Uterus (tissue), 4 donors: ENCODE measurements at regions of chr19 and their contacts with region 1.

Region 1: DNA sequence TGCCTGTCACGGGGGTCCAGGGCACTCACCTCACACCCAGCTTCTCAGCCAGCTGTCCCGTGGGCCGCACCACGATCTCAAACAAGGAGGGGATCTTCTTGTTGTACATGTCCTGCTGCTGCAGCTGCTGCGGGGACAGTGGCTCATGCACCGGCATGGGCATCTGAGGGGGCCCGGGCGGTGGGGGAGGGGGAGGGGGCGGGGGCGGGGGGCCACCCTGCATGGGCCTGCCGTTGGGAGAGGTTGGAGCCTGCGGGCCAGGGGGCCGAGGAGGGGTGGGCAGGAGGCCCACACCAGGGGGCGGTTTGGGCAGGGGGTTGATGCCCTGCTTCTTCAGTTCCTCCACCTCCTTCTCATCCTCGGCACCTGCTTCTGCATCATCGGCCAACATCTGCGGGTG is 23.9 kb upstream of the TMEM160 start:
- DNase-seq: no peak
- H3K4me3 ChIP-seq: no peak overlapping the region
- H3K27ac ChIP-seq: no peak overlapping the region
- H3K4me1 ChIP-seq: no peaks in the 10 kb centered on the region
- H3K27me3 ChIP-seq: no peaks in the 10 kb centered on the region
- CTCF ChIP-seq: no peak
- POLR2A ChIP-seq: no peak

Region 2: GRCh38 chr19:47035127-47036096 is 36.9 kb before region 1 on chr19:
- intact Hi-C with region 1: no loop called
- DNase-seq: peak; percentile 83 to 91
- H3K4me3 ChIP-seq: peak overlapping the region; percentile 37 to 46
- H3K27ac ChIP-seq: peak overlapping the region in 1 of 2 donors; percentile 42
- H3K4me1 ChIP-seq: peaks cover 0 to 8% of the 10 kb centered on the region in 2 donors
- H3K27me3 ChIP-seq: peaks cover 0 to 9% of the 10 kb centered on the region in 2 donors
- CTCF ChIP-seq: peak; percentile 95 to 98 (median 96)
- POLR2A ChIP-seq: no peak

Region 3: DNA sequence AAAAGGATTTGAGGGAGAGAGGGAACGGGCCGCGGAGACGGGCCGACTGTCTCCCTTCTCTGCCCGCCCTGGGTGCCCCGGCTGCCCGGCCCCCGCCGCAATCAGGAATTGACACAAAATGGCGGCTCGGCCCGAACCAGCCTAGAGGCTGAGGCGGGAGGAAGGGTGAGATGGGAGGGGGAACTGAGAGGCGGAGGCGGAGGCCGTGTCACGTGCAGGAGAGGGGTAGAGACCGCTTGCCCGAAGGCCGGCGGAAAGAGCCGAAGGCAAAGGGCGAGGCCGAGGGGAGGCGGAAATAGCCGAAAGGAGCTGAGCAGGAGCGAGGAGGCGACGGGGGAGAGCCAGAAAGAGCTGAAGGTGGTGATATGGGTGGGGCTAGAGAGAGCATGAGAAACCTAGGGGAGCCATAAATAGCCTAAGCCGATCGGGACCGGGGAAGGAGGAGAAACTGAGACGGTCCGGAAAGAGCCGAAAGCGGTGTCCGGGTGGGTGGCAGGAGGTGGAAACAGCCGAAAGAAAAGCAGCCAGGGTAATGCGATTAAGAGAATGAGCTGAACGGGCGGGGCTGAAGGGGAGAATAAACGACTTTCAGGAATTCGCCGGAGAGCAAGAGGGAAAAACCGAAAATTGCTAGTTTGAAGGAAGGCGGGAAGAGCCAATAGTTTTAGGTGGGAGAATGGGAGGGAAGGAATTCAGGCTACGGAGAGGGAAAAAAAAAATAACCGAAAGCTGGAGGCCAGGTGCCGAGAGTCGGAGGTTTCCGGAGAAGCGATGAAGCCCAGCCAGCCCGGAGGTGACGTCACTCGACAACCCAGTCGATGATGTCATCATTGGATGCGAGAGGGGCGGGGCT is 40.9 kb after region 1 on chr19 and contains the start of gene ZC3H4:
- intact Hi-C with region 1: loop called (anchors 2 kb)
- DNase-seq: peak; percentile 99 to 100
- H3K4me3 ChIP-seq: peak within 1 kb of the TSS; percentile 84 to 88
- H3K27ac ChIP-seq: peak within 1 kb of the TSS; percentile 100
- H3K4me1 ChIP-seq: peaks cover 0 to under 1% of the 10 kb centered on the region in 2 donors
- H3K27me3 ChIP-seq: no peaks in the 10 kb centered on the region
- CTCF ChIP-seq: peak in 3 of 4 experiments; percentile 4 to 11 (median 5)
- POLR2A ChIP-seq: peak; percentile 64 to 93
- total RNA-seq, gene ZC3H4: 3.3 to 43.1 (median 18.3) TPM